Colonic mucosa (tissue), 4 donors: ENCODE measurements at regions of chr12 and their contacts with region 1.

Region 1: GRCh38 chr12:39764944-39765560 is 145.4 kb upstream of the ABCD2 start:
- DNase-seq: no peak
- H3K4me3 ChIP-seq: no peak overlapping the region
- H3K27ac ChIP-seq: no peak overlapping the region
- H3K4me1 ChIP-seq: no peaks in the 10 kb centered on the region
- H3K27me3 ChIP-seq: no peaks in the 10 kb centered on the region
- CTCF ChIP-seq: peak; percentile 84

Region 2: GRCh38 chr12:39835517-39836489 is 70.8 kb after region 1 on chr12:
- intact Hi-C with region 1: no loop called
- DNase-seq: no peak
- H3K4me3 ChIP-seq: no peak overlapping the region
- H3K27ac ChIP-seq: no peak overlapping the region
- H3K4me1 ChIP-seq: no peaks in the 10 kb centered on the region
- H3K27me3 ChIP-seq: no peaks in the 10 kb centered on the region
- CTCF ChIP-seq: no peak

Region 3: DNA sequence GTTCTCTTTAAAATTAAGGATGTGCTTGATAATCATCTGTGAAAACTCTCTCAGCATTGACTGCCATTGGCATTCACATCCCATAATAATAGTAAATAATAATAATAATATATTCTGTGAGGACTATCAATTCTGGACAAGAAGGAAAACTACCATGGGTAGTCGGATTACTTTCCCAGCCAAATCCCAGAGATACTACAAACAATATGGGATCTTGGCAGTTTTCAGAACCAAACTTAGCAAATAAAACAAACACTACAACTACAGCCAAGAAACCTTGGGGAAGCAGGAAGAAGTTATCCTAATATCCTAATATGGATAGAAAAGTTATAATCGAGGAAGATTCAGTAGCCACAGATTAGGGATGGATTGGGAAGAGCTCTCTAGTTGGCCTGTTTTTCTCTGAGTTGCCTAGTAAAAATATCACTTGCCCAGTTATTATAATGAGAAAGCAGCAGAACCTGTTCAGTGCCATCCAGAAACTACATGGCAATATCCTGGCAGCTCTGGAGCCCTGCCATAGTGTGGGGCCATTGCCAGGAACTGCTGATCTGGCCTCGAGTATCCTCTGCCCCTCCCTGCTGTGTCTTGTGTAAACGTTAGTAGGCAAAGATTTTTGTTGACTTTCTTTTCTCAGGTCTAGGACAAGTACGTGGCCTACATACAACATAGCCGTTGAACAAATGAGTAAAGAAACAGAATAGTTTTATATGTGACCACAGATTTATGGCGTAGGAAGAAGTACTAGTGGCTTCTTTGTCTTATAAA is 147.3 kb after region 1 on chr12:
- intact Hi-C with region 1: no loop called
- DNase-seq: peak; percentile 88
- H3K4me3 ChIP-seq: no peak overlapping the region
- H3K27ac ChIP-seq: peak overlapping the region; percentile 56
- H3K4me1 ChIP-seq: no peaks in the 10 kb centered on the region
- H3K27me3 ChIP-seq: no peaks in the 10 kb centered on the region
- CTCF ChIP-seq: no peak

Region 4: GRCh38 chr12:39990122-39991101 is 225.4 kb after region 1 on chr12:
- intact Hi-C with region 1: loop called (anchors 5 kb)
- DNase-seq: peak; percentile 68
- H3K4me3 ChIP-seq: no peak overlapping the region
- H3K27ac ChIP-seq: no peak overlapping the region
- H3K4me1 ChIP-seq: no peaks in the 10 kb centered on the region
- H3K27me3 ChIP-seq: no peaks in the 10 kb centered on the region
- CTCF ChIP-seq: peak; percentile 89